Stomach (tissue), 19 donors: ENCODE measurements at regions of chr18 and their contacts with region 1.

Region 1: GRCh38 chr18:43847164-43848091 is 570.1 kb upstream of the SYT4 start:
- DNase-seq: peak in 1 of 2 donors; percentile 68
- H3K4me3 ChIP-seq: no peak overlapping the region
- H3K27ac ChIP-seq: peak overlapping the region in 4 of 5 donors; percentile 21 to 75 (median 66)
- H3K4me1 ChIP-seq: no peaks in the 10 kb centered on the region
- H3K27me3 ChIP-seq: no peaks in the 10 kb centered on the region
- CTCF ChIP-seq: no peak
- EP300 ChIP-seq: no peak
- POLR2A ChIP-seq: no peak

Region 2: GRCh38 chr18:43789234-43790000 is 58.0 kb before region 1 on chr18:
- intact Hi-C with region 1: loop called (anchors 5 kb)
- DNase-seq: peak in 1 of 2 donors; percentile 66
- H3K4me3 ChIP-seq: no peak overlapping the region
- H3K27ac ChIP-seq: no peak overlapping the region
- H3K4me1 ChIP-seq: no peaks in the 10 kb centered on the region
- H3K27me3 ChIP-seq: no peaks in the 10 kb centered on the region
- CTCF ChIP-seq: no peak
- EP300 ChIP-seq: no peak
- POLR2A ChIP-seq: no peak